SK-N-SH (cell line): ENCODE measurements at regions of chr15 and their contacts with region 1.

Region 1: GRCh38 chr15:77798151-77798835 is 165.6 kb upstream of the LINGO1 start:
- DNase-seq: no peak
- H3K4me3 ChIP-seq: no peak overlapping the region
- H3K27ac ChIP-seq: no peak overlapping the region
- H3K4me1 ChIP-seq: peaks cover 0 to 3% of the 10 kb centered on the region in 2 experiments; a peak in 1 of 4 replicates
- H3K27me3 ChIP-seq: peaks cover 17% of the 10 kb centered on the region; the same call in 1 of the 2 replicates
- CTCF ChIP-seq: no peak
- EP300 ChIP-seq: no peak
- RAD21 ChIP-seq: no peak

Region 2: DNA sequence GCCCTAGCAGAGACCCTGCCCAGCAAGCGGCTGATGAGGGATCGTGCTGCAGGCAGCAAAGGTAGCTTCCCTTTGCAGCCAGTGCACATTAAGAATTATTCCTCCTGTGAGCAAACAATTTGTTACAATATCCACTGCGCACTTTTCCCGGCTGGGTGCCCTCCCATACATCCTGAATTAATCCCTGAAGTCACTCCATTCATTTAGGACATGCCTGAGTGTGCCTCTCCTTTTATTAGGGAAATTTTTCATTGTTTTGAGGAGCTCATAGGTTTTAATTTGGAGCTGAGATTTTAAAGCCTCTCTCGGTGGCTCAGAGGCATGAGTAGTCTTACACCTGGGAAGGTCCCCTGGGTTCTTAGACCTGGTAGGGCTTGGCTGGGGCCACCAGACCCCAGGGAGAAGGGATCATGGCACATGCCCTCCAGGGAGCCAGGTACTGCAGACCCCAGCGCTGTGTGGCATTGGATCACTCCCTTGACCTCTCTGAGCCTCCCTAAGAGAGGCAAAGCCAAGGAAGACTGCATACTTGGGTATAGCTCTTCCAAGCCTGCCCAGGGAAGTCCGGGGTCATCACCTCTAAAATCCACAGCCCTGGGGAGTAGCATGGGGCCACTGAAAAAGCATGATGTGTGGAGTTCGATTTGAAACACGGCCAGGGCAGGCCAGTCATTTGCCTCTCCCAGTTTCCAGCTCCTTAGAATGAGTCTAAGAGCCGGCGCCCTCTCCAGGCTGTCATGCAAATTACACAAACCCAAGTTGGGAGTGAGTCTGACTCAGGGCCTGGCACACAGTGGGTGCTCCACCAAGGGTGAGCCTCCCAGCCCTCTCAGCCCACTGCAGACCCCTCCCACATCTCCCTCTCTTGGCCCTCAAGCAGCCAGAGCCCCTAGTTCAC is 13.6 kb before region 1 on chr15:
- CTCF ChIA-PET with region 1: interaction called, 10 read pairs
- POLR2A ChIA-PET with region 1: interaction called, 3 read pairs
- DNase-seq: peak; percentile 62
- H3K4me3 ChIP-seq: no peak overlapping the region
- H3K27ac ChIP-seq: no peak overlapping the region
- H3K4me1 ChIP-seq: no peaks in the 10 kb centered on the region
- H3K27me3 ChIP-seq: peaks cover 11% of the 10 kb centered on the region; the same call in 1 of the 2 replicates
- CTCF ChIP-seq: peak; percentile 51
- EP300 ChIP-seq: no peak
- RAD21 ChIP-seq: peak; percentile 47